ENCODE measurements at regions of chr9 and their contacts with region 1.

Region 1: GRCh38 chr9:130940693-130941576 is 1.9 kb upstream of the FIBCD1 start:
- DNase-seq: peak; percentile 81 to 83 (median 81)
- ATAC-seq: peak; percentile 92 to 97 (median 96)
- H3K4me3 ChIP-seq: no peak overlapping the region
- H3K27ac ChIP-seq: no peak overlapping the region
- H3K4me1 ChIP-seq: peaks cover 0 to 10% (median 0%) of the 10 kb centered on the region in 4 donors
- H3K27me3 ChIP-seq: peaks cover 0 to 36% of the 10 kb centered on the region in 2 donors
- CTCF ChIP-seq: peak; percentile 79 to 90 (median 88)
- POLR2A ChIP-seq: no peak

Region 2: GRCh38 chr9:130707225-130707976 is 233.5 kb before region 1 on chr9:
- intact Hi-C with region 1: loop called in 1 of 2 experiments (anchors 5 kb)
- DNase-seq: peak in 2 of 3 donors; percentile 53 to 68
- ATAC-seq: peak; percentile 57 to 68 (median 64)
- H3K4me3 ChIP-seq: no peak overlapping the region
- H3K27ac ChIP-seq: no peak overlapping the region
- H3K4me1 ChIP-seq: no peaks in the 10 kb centered on the region
- H3K27me3 ChIP-seq: no peaks in the 10 kb centered on the region
- CTCF ChIP-seq: peak; percentile 66 to 83 (median 80)
- POLR2A ChIP-seq: no peak

Region 3: DNA sequence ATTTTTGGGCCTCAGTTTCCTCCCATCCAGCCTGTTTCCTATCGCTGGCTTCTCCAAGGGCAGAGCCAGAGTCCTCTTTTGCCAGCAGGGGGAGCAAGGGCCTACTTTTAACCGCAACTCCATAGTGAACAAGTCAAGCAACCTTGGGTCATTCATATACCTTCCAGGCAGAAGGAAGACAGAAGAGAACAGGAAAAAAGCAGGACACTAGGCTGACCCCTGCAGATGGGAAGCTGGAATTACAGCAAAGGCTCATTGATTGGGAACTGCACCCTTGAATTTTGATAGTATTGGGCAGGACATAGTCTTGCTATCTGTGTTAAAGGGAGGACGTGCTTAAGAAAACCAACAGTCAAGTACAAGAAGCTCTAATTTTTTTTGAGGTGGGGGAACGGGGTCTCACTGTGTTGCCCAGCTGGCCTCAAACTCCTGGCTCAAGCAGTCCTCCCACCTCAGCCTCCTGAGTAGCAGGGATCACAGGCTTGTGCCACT is 74.4 kb before region 1 on chr9:
- intact Hi-C with region 1: loop called in 1 of 2 experiments (anchors 5 kb)
- DNase-seq: peak; percentile 57 to 72 (median 60)
- ATAC-seq: peak; percentile 83 to 88 (median 87)
- H3K4me3 ChIP-seq: no peak overlapping the region
- H3K27ac ChIP-seq: no peak overlapping the region
- H3K4me1 ChIP-seq: no peaks in the 10 kb centered on the region
- H3K27me3 ChIP-seq: no peaks in the 10 kb centered on the region
- CTCF ChIP-seq: peak; percentile 75 to 87 (median 82)
- POLR2A ChIP-seq: no peak

Measured in right lobe of liver (tissue), 6 donors.